Endothelial cell of umbilical vein (primary cell): ENCODE measurements at regions of chr3 and their contacts with region 1.

Region 1: DNA sequence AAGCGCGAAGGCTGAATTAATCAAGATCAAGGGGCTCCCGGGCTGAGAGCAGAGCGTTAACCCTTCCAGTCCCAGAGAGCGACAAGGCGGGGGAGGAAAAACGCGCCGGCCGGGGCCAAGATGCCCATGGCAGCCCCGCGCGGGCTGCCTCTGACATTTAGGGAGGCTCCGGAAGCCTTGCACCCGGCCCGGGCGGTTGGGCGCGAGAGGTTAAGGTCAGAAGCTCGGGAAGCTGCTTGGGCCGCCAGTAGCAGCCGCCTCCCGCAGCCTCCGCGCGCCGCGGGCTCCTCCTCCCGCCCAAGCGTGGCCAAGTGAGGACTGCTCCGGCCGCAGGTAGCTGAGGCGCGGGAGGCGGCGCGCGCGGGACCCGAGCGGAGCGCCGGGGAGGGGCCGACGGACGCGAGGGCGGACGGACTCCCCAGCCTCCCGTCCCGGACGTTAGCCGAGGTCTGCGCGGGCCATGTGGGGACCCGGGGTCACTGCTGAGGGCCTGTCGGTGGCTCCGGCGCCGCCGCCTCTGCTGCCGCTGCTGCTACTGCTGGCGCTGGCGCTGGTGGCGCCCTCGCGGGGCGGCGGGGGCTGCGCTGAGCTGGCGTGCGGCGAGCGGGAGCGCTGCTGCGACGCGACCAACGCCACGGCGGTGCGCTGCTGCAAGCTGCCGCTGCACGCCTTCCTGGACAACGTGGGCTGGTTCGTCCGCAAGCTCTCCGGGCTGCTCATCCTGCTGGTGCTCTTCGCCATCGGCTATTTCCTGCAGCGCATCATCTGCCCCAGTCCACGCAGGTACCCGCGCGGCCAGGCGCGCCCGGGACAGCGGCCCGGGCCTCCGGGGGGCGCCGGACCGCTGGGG is at the start of gene C3orf80:
- DNase-seq: peak; percentile 57
- H3K4me3 ChIP-seq: peak within 1 kb of the TSS; percentile 6 to 43 (median 40)
- H3K27ac ChIP-seq: no peak within 1 kb of the TSS
- H3K4me1 ChIP-seq: peaks cover 7% of the 10 kb centered on the region
- H3K27me3 ChIP-seq: peaks cover 26 to 39% of the 10 kb centered on the region in 2 experiments
- CTCF ChIP-seq: peak in 1 of 2 donors; percentile 3
- POLR2A ChIP-seq: no peak
- total RNA-seq, gene C3orf80: not detected in 2 replicates

Region 2: DNA sequence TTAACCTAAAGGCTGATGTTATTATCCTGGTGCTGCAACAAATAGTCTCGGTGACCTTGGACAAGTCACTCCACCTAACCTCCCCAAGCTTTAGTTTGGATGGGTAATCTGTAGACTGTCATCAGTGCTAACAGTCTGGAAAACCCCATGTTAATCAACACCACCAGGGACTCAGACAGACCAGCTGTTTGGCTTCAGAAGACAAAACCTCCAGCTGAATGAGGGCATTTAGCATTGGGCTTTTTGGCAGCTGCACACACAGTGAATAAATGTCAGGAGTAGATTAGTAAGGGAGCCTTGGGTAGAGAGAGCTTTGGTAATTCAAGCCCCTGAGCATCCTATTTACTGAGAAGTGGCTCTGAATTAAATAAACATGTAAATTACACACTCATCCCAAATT is 25.0 kb before region 1 on chr3:
- CTCF ChIA-PET with region 1: no interaction called
- POLR2A ChIA-PET with region 1: no interaction called
- dilution Hi-C with region 1: no loop called
- intact Hi-C with region 1: loop called (anchors 1 kb)
- DNase-seq: no peak
- H3K4me3 ChIP-seq: no peak overlapping the region
- H3K27ac ChIP-seq: no peak overlapping the region
- H3K4me1 ChIP-seq: no peaks in the 10 kb centered on the region
- H3K27me3 ChIP-seq: peaks cover 0 to 4% of the 10 kb centered on the region in 2 experiments
- CTCF ChIP-seq: no peak
- POLR2A ChIP-seq: no peak

Region 3: GRCh38 chr3:160278210-160278609 is 52.8 kb after region 1 on chr3:
- CTCF ChIA-PET with region 1: no interaction called
- POLR2A ChIA-PET with region 1: no interaction called
- dilution Hi-C with region 1: no loop called
- intact Hi-C with region 1: no loop called
- DNase-seq: no peak
- H3K4me3 ChIP-seq: no peak overlapping the region
- H3K27ac ChIP-seq: no peak overlapping the region
- H3K4me1 ChIP-seq: no peaks in the 10 kb centered on the region
- H3K27me3 ChIP-seq: no peaks in the 10 kb centered on the region
- CTCF ChIP-seq: no peak
- POLR2A ChIP-seq: no peak

Region 4: DNA sequence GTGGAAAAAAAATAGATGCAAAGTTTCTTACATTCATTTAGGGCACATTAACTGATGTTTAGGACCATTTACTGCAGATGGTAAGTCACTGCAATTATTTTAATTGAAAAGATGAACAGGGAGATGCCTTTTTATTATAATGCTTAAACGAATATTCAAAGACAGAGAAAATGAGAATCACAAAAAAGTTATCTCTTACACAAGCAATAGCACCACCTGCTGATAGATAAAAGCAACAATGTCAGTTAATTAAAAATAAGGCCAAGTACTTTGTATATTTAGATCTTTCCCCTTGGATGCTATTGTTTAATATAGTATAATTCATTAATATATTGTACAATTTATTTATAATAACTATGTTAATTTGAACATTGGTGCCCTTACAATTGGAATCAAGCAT is 117.7 kb after region 1 on chr3:
- CTCF ChIA-PET with region 1: no interaction called
- POLR2A ChIA-PET with region 1: no interaction called
- dilution Hi-C with region 1: no loop called
- intact Hi-C with region 1: loop called (anchors 5 kb)
- DNase-seq: peak; percentile 23
- H3K4me3 ChIP-seq: no peak overlapping the region
- H3K27ac ChIP-seq: no peak overlapping the region
- H3K4me1 ChIP-seq: no peaks in the 10 kb centered on the region
- H3K27me3 ChIP-seq: no peaks in the 10 kb centered on the region
- CTCF ChIP-seq: peak in 1 of 2 donors; percentile 9
- POLR2A ChIP-seq: no peak

Region 5: DNA sequence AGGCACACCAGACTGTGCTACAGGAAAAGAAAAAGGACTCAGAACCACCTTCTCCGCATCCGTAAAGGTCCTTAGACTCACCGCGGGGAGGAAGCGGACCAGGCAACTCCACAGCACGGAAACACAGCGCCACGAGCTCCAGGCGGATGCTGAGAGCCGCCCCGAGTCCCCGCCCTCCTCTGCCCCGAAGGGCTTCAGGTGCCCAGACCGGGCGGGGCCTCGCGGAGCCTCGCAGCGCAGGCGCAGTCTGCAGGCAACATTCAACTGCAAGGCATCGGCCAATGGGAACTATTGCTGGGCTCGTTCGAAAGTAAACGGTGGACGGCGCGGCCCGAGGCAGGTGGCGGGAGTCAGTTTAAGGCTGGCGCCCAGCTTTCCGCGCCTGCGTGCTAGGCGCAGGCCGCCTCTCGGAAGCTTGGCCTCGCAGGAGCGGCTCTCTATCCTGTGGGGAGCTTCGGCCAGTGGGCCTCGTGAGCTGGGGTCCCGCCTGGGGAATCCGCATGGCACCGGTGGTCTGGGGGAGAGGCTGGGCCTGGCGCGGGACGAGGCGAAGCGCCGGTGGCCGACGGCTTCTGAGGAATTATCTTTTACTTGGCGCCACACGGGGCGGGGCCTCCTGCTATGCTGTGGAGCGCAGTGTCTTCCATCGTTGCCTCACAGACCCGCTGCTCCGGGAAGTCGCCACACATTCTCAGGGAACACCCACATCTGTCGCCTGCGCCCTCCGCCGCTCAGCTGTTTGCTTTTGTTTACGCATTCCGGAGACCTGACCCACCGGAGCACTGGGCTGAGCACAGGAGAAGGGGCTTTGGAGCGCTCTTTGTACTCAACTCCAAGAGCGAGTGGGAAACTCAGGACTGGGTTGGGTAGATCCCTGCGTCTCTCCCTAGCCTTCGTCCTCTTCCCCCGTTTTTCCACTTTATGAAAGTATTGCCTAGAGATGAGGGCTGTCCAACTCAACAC is 224.5 kb after region 1 on chr3 and contains the start of gene TRIM59:
- CTCF ChIA-PET with region 1: no interaction called
- POLR2A ChIA-PET with region 1: no interaction called
- dilution Hi-C with region 1: no loop called
- intact Hi-C with region 1: loop called (anchors 1 kb)
- DNase-seq: peak; percentile 98
- H3K4me3 ChIP-seq: peak within 1 kb of the TSS; percentile 52 to 85 (median 74)
- H3K27ac ChIP-seq: peak within 1 kb of the TSS; percentile 55
- H3K4me1 ChIP-seq: peaks cover 21% of the 10 kb centered on the region
- H3K27me3 ChIP-seq: no peaks in the 10 kb centered on the region
- CTCF ChIP-seq: no peak
- POLR2A ChIP-seq: peak; percentile 88
- total RNA-seq, gene TRIM59: 32.5 and 33.0 TPM in 2 replicates